B cell (primary cell): ENCODE measurements at regions of chr9 and their contacts with region 1.

Region 1: DNA sequence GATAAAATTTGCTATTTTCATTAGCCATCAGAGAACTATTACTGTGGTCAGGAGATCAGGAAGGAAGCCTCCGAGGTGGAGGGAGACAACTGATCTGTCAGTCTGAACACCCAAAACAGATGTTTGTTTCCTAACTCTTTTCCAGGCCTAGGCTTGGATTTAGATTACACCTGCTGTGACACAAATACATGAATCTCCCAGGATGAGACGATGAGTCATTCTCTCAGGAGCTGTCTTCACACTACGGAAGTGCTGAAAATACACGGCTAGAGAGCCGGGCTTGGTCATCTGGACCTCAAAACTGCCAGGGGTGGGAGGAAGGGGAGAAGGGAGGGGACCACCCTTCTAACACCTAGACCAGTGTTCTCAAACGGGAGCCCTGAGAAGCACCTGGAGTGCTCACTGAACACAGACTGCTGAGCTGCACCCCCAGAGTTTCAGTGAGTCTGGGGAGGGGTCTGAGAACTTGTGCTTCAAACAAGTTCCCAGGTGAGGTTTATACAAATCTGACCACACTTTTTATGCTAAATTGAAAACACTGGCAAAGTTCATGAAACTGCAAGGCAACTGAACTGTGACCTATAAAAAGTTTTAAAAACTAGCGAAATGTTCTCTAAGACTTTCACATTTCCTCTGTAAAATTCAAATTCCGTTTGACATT is 80.3 kb upstream of the EQTN start:
- DNase-seq: no peak
- ATAC-seq: no peak
- H3K4me3 ChIP-seq: peak overlapping the region in 4 of 5 experiments; percentile 8 to 51 (median 28)
- H3K4me3 Mint-ChIP-seq: peak overlapping the region; percentile 74
- H3K27ac ChIP-seq: peak overlapping the region; percentile 81 to 85
- H3K27ac Mint-ChIP-seq: peak overlapping the region; percentile 85
- H3K4me1 ChIP-seq: peaks cover 64 to 72% of the 10 kb centered on the region in 2 donors
- H3K4me1 Mint-ChIP-seq: peaks cover 68% of the 10 kb centered on the region
- H3K27me3 ChIP-seq: no peaks in the 10 kb centered on the region
- H3K27me3 Mint-ChIP-seq: no peaks in the 10 kb centered on the region
- CTCF ChIP-seq: no peak

Region 2: DNA sequence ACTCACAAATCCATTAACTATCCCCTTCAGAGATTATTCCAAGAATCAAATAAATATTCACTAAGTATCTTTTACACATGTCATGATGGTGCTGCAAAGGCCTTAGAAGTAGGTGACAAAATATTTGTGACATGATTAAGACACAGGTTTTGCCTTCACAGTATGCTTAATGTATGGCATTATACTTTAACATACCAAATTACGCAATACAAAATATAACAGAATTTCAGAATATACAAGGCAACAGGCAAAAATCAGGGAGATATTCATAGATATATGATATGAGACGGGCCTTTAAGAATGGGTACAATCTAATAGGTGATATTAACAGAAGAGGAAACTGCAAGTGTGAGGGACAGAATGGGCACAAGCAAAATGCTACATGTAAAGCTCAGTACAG is 526.3 kb before region 1 on chr9:
- CTCF ChIA-PET with region 1: no interaction called
- POLR2A ChIA-PET with region 1: no interaction called
- intact Hi-C with region 1: no loop called
- DNase-seq: no peak
- ATAC-seq: no peak
- H3K4me3 ChIP-seq: no peak overlapping the region
- H3K4me3 Mint-ChIP-seq: no peak overlapping the region
- H3K27ac ChIP-seq: no peak overlapping the region
- H3K27ac Mint-ChIP-seq: no peak overlapping the region
- H3K4me1 ChIP-seq: no peaks in the 10 kb centered on the region
- H3K4me1 Mint-ChIP-seq: no peaks in the 10 kb centered on the region
- H3K27me3 ChIP-seq: no peaks in the 10 kb centered on the region
- H3K27me3 Mint-ChIP-seq: no peaks in the 10 kb centered on the region
- CTCF ChIP-seq: no peak

Region 3: DNA sequence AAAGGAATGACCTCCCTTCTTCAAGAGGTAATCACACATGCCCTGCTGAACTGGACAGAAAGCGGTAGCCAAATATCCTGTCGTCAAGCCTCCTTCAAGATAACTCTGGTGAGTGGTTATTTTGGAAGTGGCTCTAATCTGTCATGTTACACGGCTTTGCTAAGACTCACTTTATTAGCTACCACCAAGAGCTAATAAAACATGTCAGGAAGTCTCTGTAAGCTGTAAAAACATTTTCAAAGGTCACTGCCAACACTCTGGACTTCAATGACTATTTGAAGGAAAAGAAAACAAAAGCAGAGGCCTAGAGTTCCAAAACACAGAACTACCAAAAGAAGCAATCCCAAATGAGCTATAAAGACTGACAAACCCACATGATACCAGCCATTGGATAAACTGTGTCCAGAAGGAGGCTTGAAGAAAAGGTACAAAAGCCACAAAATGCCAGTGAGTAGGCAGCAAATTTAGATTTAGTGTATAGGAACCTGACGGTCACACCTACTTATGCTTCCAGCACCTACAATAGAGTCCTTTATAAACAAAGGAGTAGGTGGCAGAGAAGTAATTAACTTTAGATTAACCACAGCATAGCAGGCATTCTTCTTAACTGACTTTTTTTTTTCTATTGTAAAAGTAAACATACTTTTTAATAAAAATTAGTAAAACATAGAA is 17.0 kb after region 1 on chr9:
- CTCF ChIA-PET with region 1: interaction called, 16 read pairs
- POLR2A ChIA-PET with region 1: no interaction called
- intact Hi-C with region 1: no loop called
- DNase-seq: no peak
- ATAC-seq: no peak
- H3K4me3 ChIP-seq: no peak overlapping the region
- H3K4me3 Mint-ChIP-seq: no peak overlapping the region
- H3K27ac ChIP-seq: peak overlapping the region; percentile 28 to 68
- H3K27ac Mint-ChIP-seq: peak overlapping the region; percentile 34
- H3K4me1 ChIP-seq: peaks cover 51 to 58% of the 10 kb centered on the region in 2 donors
- H3K4me1 Mint-ChIP-seq: peaks cover 71% of the 10 kb centered on the region
- H3K27me3 ChIP-seq: no peaks in the 10 kb centered on the region
- H3K27me3 Mint-ChIP-seq: no peaks in the 10 kb centered on the region
- CTCF ChIP-seq: no peak

Region 4: GRCh38 chr9:27441741-27442070 is 64.4 kb after region 1 on chr9:
- CTCF ChIA-PET with region 1: interaction called, 3 read pairs
- POLR2A ChIA-PET with region 1: no interaction called
- intact Hi-C with region 1: loop called (anchors 5 kb)
- DNase-seq: peak; percentile 51
- ATAC-seq: peak; percentile 95
- H3K4me3 ChIP-seq: peak overlapping the region in 1 of 5 experiments; percentile 21
- H3K4me3 Mint-ChIP-seq: peak overlapping the region; percentile 70
- H3K27ac ChIP-seq: peak overlapping the region; percentile 15 to 42
- H3K27ac Mint-ChIP-seq: peak overlapping the region; percentile 87
- H3K4me1 ChIP-seq: peaks cover 50 to 53% of the 10 kb centered on the region in 2 donors
- H3K4me1 Mint-ChIP-seq: peaks cover 70% of the 10 kb centered on the region
- H3K27me3 ChIP-seq: no peaks in the 10 kb centered on the region
- H3K27me3 Mint-ChIP-seq: no peaks in the 10 kb centered on the region
- CTCF ChIP-seq: no peak